Activated CD4-positive, alpha-beta T cell treated with anti-CD3 and anti-CD28 coated beads, Interleukin-2, amount 10 ng/mL, durations not matched to agents 24 days and 14 days (primary cell): ENCODE measurements at regions of chr13 and their contacts with region 1.

Region 1: GRCh38 chr13:36346222-36347083 is at the start of gene SPART:
- DNase-seq: peak; percentile 96
- H3K4me3 Mint-ChIP-seq: peak within 1 kb of the TSS; percentile 92
- H3K27ac Mint-ChIP-seq: peak within 1 kb of the TSS; percentile 92
- H3K4me1 Mint-ChIP-seq: peaks cover 16% of the 10 kb centered on the region
- H3K27me3 Mint-ChIP-seq: peaks cover 5% of the 10 kb centered on the region
- total RNA-seq, gene SPART: 25.3 and 31.8 TPM in 2 replicates

Region 2: DNA sequence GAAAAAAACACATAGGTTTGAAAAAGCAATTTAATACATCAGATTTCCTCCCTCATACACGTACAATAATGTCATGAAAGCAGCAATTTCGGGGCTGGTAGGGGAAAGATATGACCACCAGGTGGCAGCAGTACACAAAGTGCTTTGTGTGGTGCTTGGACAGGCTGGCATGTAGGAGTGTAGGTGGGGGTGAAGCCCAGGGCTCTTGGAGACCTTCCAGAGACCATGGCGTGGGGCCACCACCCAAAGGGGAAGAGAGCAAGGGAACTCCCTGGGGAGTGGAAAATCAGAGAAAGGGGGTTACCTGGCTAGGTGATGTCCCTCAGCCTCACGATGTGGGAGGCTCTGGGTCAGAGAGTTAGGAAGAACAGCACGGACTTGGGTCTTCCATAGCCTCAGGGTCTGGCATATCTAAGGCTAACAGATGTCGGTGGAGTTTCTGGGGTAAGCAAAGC is 74.0 kb after region 1 on chr13:
- intact Hi-C with region 1: loop called (anchors 1 kb)
- DNase-seq: peak; percentile 93
- H3K4me3 Mint-ChIP-seq: peak overlapping the region; percentile 43
- H3K27ac Mint-ChIP-seq: peak overlapping the region; percentile 86
- H3K4me1 Mint-ChIP-seq: peaks cover 32% of the 10 kb centered on the region
- H3K27me3 Mint-ChIP-seq: peaks cover 16% of the 10 kb centered on the region

Region 3: DNA sequence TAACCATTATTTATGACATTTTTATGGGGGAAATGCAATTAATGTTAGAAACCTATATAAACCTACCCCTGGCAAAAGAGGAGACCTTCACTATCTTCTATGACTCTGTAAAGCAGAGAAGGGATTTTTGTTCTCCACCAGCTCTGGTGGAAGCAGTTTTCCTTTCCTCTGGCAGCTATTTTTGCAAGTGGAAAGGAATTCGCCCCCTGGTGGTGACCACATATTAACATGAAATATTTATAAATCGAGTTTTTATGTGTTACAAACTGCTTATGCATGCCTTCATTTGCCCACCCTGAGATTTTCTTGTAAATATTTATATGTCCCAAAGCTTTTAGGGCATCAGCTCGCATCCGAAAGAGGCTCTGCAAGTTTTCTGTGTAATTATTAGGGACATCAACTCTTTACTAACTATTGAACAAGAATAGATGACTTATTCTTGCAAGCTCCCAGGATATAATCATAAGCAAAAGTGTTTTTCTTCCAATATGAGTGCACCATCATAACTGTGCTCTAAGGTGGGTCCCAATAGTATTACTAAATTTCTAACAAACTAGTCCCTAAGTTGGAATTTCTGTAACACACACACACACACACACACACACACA is 389.8 kb after region 1 on chr13:
- intact Hi-C with region 1: loop called (anchors 1 kb)
- DNase-seq: peak; percentile 78
- H3K4me3 Mint-ChIP-seq: no peak overlapping the region
- H3K27ac Mint-ChIP-seq: no peak overlapping the region
- H3K4me1 Mint-ChIP-seq: no peaks in the 10 kb centered on the region
- H3K27me3 Mint-ChIP-seq: peaks cover 5% of the 10 kb centered on the region

Region 4: GRCh38 chr13:36999054-36999714 is 652.7 kb after region 1 on chr13 and contains the start of gene ALG5:
- intact Hi-C with region 1: loop called (anchors 2 kb)
- DNase-seq: peak; percentile 99
- H3K4me3 Mint-ChIP-seq: peak within 1 kb of the TSS; percentile 99
- H3K27ac Mint-ChIP-seq: peak within 1 kb of the TSS; percentile 100
- H3K4me1 Mint-ChIP-seq: peaks cover 31% of the 10 kb centered on the region
- H3K27me3 Mint-ChIP-seq: no peaks in the 10 kb centered on the region
- total RNA-seq, gene ALG5: 53.6 and 53.8 TPM in 2 replicates

Region 5: GRCh38 chr13:38349390-38350113 is 2003.1 kb after region 1 on chr13 and contains the start of gene UFM1:
- intact Hi-C with region 1: loop called (anchors 5 kb)
- DNase-seq: peak; percentile 95
- H3K4me3 Mint-ChIP-seq: peak within 1 kb of the TSS; percentile 99
- H3K27ac Mint-ChIP-seq: peak within 1 kb of the TSS; percentile 99
- H3K4me1 Mint-ChIP-seq: peaks cover 34% of the 10 kb centered on the region
- H3K27me3 Mint-ChIP-seq: no peaks in the 10 kb centered on the region
- total RNA-seq, gene UFM1: 63.5 and 69.4 TPM in 2 replicates